ENCODE measurements at regions of chr5 and their contacts with region 1.

Region 1: GRCh38 chr5:156913719-156914370 is 49.2 kb downstream of the TIMD4 start:
- DNase-seq: peak in 6 of 9 donors; percentile 32 to 60 (median 54)
- ATAC-seq: peak; percentile 85
- H3K4me3 ChIP-seq: peak overlapping the region; percentile 24
- H3K4me3 Mint-ChIP-seq: peak overlapping the region; percentile 71 to 93 (median 82)
- H3K27ac ChIP-seq: peak overlapping the region; percentile 65
- H3K27ac Mint-ChIP-seq: peak overlapping the region; percentile 91 to 100 (median 97)
- H3K4me1 ChIP-seq: peaks cover 24 to 28% of the 10 kb centered on the region in 2 donors
- H3K4me1 Mint-ChIP-seq: peaks cover 35 to 81% (median 68%) of the 10 kb centered on the region in 7 donors
- H3K27me3 ChIP-seq: no peaks in the 10 kb centered on the region
- H3K27me3 Mint-ChIP-seq: no peaks in the 10 kb centered on the region

Region 2: GRCh38 chr5:156893517-156893916 is 20.3 kb before region 1 on chr5:
- CTCF ChIA-PET with region 1: interaction called, 4 read pairs
- POLR2A ChIA-PET with region 1: no interaction called
- intact Hi-C with region 1: loop called in 1 of 2 experiments (anchors 2 kb)
- DNase-seq: no peak
- ATAC-seq: no peak
- H3K4me3 ChIP-seq: no peak overlapping the region
- H3K4me3 Mint-ChIP-seq: peak overlapping the region in 5 of 10 donors; percentile 12 to 58 (median 19)
- H3K27ac ChIP-seq: no peak overlapping the region
- H3K27ac Mint-ChIP-seq: peak overlapping the region in 6 of 9 donors; percentile 2 to 93 (median 58)
- H3K4me1 ChIP-seq: peaks cover 0 to 15% of the 10 kb centered on the region in 2 donors
- H3K4me1 Mint-ChIP-seq: peaks cover 21 to 52% (median 32%) of the 10 kb centered on the region in 7 donors
- H3K27me3 ChIP-seq: no peaks in the 10 kb centered on the region
- H3K27me3 Mint-ChIP-seq: no peaks in the 10 kb centered on the region

Region 3: GRCh38 chr5:156929366-156929948 is 15.6 kb after region 1 on chr5:
- CTCF ChIA-PET with region 1: interaction called, 9 read pairs
- POLR2A ChIA-PET with region 1: interaction called, 53 read pairs
- intact Hi-C with region 1: loop called (anchors 1 to 2 kb)
- DNase-seq: peak in 5 of 9 donors; percentile 10 to 50 (median 34)
- ATAC-seq: peak; percentile 45
- H3K4me3 ChIP-seq: no peak overlapping the region
- H3K4me3 Mint-ChIP-seq: peak overlapping the region; percentile 50 to 77 (median 58)
- H3K27ac ChIP-seq: peak overlapping the region; percentile 34
- H3K27ac Mint-ChIP-seq: peak overlapping the region; percentile 68 to 97 (median 88)
- H3K4me1 ChIP-seq: peaks cover 9 to 51% of the 10 kb centered on the region in 2 donors
- H3K4me1 Mint-ChIP-seq: peaks cover 31 to 94% (median 89%) of the 10 kb centered on the region in 7 donors
- H3K27me3 ChIP-seq: no peaks in the 10 kb centered on the region
- H3K27me3 Mint-ChIP-seq: no peaks in the 10 kb centered on the region

Measured in naive thymus-derived CD4-positive, alpha-beta T cell (primary cell).